ENCODE measurements at regions of chr2 and their contacts with region 1.

Region 1: DNA sequence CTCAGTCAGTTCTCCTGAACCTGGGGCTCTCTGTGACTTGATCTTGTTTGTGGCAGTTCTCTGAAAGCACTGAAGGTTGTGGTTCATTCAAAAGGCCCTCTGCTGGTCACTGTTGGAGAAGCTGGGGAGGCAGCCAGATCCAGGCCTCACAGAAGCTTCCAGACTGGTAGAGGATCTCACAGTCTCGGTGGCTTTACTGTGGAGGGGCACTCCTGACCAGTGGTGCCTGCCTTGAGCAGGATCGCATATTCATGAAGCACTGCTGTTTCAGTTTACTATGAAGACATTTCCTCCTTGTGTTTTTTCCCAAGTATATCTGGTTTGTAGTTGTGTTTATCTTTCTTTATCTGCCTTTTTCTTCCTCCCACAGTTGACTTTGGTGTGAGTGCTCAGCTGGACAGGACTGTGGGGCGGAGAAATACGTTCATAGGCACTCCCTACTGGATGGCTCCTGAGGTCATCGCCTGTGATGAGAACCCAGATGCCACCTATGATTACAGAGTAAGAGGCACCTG is 133.9 kb downstream of the MAP4K4 start:
- DNase-seq: peak; percentile 74 to 76
- H3K4me3 ChIP-seq: no peak overlapping the region
- H3K27ac ChIP-seq: peak overlapping the region in 2 of 3 donors; percentile 48 to 72
- H3K4me1 ChIP-seq: peaks cover 3 to 12% of the 10 kb centered on the region in 2 donors
- H3K27me3 ChIP-seq: no peaks in the 10 kb centered on the region
- CTCF ChIP-seq: peak; percentile 22 to 75 (median 62)
- POLR2A ChIP-seq: no peak

Region 2: GRCh38 chr2:101419096-101419663 is 412.2 kb before region 1 on chr2:
- intact Hi-C with region 1: loop called (anchors 5 kb)
- DNase-seq: peak; percentile 52 to 61
- H3K4me3 ChIP-seq: no peak overlapping the region
- H3K27ac ChIP-seq: no peak overlapping the region
- H3K4me1 ChIP-seq: no peaks in the 10 kb centered on the region
- H3K27me3 ChIP-seq: no peaks in the 10 kb centered on the region
- CTCF ChIP-seq: peak; percentile 55 to 81 (median 64)
- POLR2A ChIP-seq: no peak

Region 3: DNA sequence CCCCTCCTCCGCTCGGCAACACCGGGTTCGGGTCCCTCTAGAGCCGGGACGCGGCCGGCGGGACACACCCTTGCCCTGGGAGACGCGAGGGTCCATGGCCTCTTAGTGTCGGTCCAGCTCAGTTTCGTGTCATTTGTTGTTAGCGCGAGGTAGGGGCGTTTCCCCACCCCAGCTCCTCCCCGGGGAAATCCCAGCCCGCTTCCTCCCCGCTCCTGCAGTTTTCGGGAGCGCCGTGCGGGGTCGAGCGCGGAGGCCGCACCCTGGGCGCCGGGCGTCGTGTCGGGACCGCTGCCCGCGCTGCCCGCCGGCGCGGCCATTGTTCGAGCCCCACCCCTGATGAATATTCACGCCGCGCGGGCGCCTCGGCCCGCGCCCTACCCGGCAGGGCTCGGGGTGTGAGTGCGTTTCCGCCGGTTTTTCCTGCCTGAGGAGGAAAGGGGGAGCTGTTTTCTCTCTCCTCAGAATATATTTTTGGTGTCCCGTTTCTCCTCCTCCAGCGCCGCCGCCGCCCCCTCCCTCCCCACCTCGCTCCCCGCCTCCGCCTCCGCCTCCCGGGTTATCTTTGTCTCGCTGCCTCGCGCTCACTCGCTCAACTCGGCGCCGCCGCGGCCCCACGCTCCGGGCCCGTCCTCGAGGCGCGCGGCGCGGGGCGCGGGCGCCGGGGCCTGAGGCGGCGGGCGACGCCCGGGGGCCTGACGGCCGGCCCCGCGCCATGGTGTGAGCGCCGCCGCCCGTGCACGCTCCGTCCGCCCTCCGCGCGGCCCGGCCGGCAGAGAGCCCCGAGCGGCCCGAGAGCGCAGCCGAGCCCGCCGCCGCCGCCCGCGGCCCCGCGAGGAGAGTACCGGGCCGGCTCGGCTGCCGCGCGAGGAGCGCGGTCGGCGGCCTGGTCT is 134.0 kb before region 1 on chr2 and contains the start of gene MAP4K4:
- intact Hi-C with region 1: loop called (anchors 10 kb)
- DNase-seq: peak; percentile 72 to 76
- H3K4me3 ChIP-seq: peak within 1 kb of the TSS; percentile 28 to 58 (median 54)
- H3K27ac ChIP-seq: peak within 1 kb of the TSS; percentile 60 to 85 (median 81)
- H3K4me1 ChIP-seq: peaks cover 14 to 20% of the 10 kb centered on the region in 2 donors
- H3K27me3 ChIP-seq: no peaks in the 10 kb centered on the region
- CTCF ChIP-seq: peak in 2 of 6 experiments; percentile 23 to 37
- POLR2A ChIP-seq: peak in 1 of 2 donors; percentile 55
- total RNA-seq, gene MAP4K4: 33.8 to 47.3 (median 35.7) TPM

Measured in thyroid gland (tissue), 4 donors.